HepG2 (cell line): ENCODE measurements at regions of chr10 and their contacts with region 1.

Region 1: GRCh38 chr10:73529089-73529832 is 33.4 kb upstream of the PPP3CB start:
- DNase-seq: peak; percentile 89
- ATAC-seq: peak; percentile 99
- H3K4me3 ChIP-seq: no peak overlapping the region
- H3K27ac ChIP-seq: no peak overlapping the region
- H3K4me1 ChIP-seq: peaks cover 6% of the 10 kb centered on the region
- H3K27me3 ChIP-seq: no peaks in the 10 kb centered on the region
- CTCF ChIP-seq: peak; percentile 85
- EP300 ChIP-seq: no peak
- POLR2A ChIP-seq: no peak
- RAD21 ChIP-seq: peak; percentile 92

Region 2: GRCh38 chr10:73586583-73586984 is 57.3 kb after region 1 on chr10:
- CTCF ChIA-PET with region 1: no interaction called
- POLR2A ChIA-PET with region 1: no interaction called
- in situ Hi-C with region 1: no loop called
- intact Hi-C with region 1: loop called (anchors 2 kb)
- DNase-seq: peak; percentile 93
- ATAC-seq: peak; percentile 83
- H3K4me3 ChIP-seq: peak overlapping the region in 2 of 3 experiments; percentile 25 to 39; a peak in 3 of 6 replicates
- H3K27ac ChIP-seq: peak overlapping the region; percentile 68
- H3K4me1 ChIP-seq: peaks cover 83% of the 10 kb centered on the region
- H3K27me3 ChIP-seq: no peaks in the 10 kb centered on the region; a peak in 1 of 5 replicates
- CTCF ChIP-seq: no peak
- EP300 ChIP-seq: peak in 1 of 2 experiments; percentile 92; a peak in 2 of 4 replicates
- POLR2A ChIP-seq: no peak
- RAD21 ChIP-seq: no peak

Region 3: GRCh38 chr10:73644015-73644743 is 114.9 kb after region 1 on chr10:
- CTCF ChIA-PET with region 1: interaction called, 85 read pairs
- POLR2A ChIA-PET with region 1: interaction called, 6 read pairs
- in situ Hi-C with region 1: loop called (anchors 5 kb)
- intact Hi-C with region 1: loop called (anchors 1 kb)
- DNase-seq: peak; percentile 50
- ATAC-seq: peak; percentile 56
- H3K4me3 ChIP-seq: no peak overlapping the region
- H3K27ac ChIP-seq: no peak overlapping the region
- H3K4me1 ChIP-seq: peaks cover 19% of the 10 kb centered on the region
- H3K27me3 ChIP-seq: peaks cover 1 to 19% of the 10 kb centered on the region in 2 experiments; a peak in 3 of 5 replicates
- CTCF ChIP-seq: peak; percentile 87
- EP300 ChIP-seq: no peak
- POLR2A ChIP-seq: no peak
- RAD21 ChIP-seq: peak; percentile 87